ENCODE measurements at regions of chr21 and their contacts with region 1.

Region 1: DNA sequence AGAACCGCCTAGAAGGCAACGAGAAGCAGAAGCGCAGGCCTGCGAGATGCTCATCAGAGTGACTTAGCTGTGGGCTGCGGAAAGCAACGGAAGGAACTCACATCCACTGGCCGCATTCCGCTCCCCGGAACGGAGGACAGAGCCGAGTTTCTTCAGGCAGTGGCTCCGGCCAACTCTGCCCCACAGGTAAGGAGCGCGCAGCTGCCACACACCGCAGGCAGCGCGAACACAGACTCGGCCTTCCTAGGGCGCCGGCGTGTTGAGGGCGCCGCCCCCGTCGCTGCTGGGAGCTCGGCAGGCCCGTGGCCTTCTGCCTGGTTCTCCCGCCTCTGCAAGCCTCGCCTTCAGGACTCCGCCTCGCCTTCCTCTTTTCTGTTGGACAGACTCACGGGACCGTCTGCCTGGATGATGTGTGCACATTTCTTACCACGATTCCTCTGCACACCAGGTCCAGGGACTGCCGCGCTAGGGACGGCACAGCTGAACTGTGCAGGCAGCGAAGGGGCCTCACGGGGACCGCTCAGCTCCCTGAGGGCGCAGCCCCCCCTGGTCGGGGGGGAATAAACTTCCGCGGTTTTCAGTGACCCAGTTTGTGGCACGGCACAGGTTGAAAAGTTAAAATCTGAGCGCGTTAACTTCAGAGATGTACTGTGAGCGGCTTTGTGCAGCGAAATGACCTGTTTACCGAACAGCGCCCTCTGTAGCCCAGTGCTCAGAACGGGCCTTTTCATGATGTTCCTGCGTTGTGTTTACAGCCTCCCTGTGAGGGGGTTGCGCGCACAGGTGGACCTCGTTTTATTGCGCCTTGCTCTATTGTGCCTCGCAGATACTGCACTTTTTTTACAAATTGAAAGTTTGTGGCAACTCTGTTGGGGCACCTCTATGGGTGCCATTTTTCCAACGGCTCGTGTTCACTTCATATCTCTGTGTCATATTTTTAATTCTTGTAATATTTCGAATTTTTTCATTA is 15.8 kb downstream of the TCP10L start:
- DNase-seq: no peak
- H3K4me3 ChIP-seq: peak overlapping the region; percentile 66
- CTCF ChIP-seq: peak; percentile 86

Region 2: GRCh38 chr21:32392880-32393676 is 176.5 kb before region 1 on chr21 and contains the start of gene URB1:
- CTCF ChIA-PET with region 1: interaction called, 15 read pairs
- POLR2A ChIA-PET with region 1: no interaction called
- DNase-seq: no peak
- H3K4me3 ChIP-seq: peak within 1 kb of the TSS; percentile 93
- CTCF ChIP-seq: no peak

Region 3: GRCh38 chr21:32545948-32546441 is 23.6 kb before region 1 on chr21:
- CTCF ChIA-PET with region 1: no interaction called
- POLR2A ChIA-PET with region 1: no interaction called
- DNase-seq: no peak
- H3K4me3 ChIP-seq: no peak overlapping the region
- CTCF ChIP-seq: no peak

Region 4: GRCh38 chr21:32587120-32587519 is 17.6 kb after region 1 on chr21:
- CTCF ChIA-PET with region 1: interaction called, 34 read pairs
- POLR2A ChIA-PET with region 1: no interaction called
- DNase-seq: no peak
- H3K4me3 ChIP-seq: no peak overlapping the region
- CTCF ChIP-seq: no peak

Region 5: DNA sequence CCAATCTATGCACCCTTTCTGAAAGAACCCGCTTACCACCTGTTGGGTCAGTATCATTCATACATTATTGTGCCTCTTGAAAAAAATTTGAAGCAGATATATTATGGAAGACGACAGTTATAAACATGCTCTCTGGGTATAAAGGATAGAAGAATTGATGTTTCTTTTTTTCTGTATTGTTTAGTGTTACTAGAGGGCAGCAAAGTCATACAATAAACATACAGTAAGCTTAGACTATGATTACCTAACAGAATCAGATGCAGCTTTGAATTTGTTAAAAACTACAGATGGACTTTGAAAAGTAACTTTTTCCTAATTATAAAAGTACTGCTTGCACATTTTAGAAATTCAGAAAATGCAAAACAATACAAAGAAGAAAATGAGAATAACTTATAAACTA is 213.2 kb after region 1 on chr21:
- CTCF ChIA-PET with region 1: no interaction called
- POLR2A ChIA-PET with region 1: no interaction called
- DNase-seq: no peak
- H3K4me3 ChIP-seq: no peak overlapping the region
- CTCF ChIP-seq: no peak

Measured in AG04449 (cell line).